Mammary epithelial cell (primary cell): ENCODE measurements at regions of chr3 and their contacts with region 1.

Region 1: DNA sequence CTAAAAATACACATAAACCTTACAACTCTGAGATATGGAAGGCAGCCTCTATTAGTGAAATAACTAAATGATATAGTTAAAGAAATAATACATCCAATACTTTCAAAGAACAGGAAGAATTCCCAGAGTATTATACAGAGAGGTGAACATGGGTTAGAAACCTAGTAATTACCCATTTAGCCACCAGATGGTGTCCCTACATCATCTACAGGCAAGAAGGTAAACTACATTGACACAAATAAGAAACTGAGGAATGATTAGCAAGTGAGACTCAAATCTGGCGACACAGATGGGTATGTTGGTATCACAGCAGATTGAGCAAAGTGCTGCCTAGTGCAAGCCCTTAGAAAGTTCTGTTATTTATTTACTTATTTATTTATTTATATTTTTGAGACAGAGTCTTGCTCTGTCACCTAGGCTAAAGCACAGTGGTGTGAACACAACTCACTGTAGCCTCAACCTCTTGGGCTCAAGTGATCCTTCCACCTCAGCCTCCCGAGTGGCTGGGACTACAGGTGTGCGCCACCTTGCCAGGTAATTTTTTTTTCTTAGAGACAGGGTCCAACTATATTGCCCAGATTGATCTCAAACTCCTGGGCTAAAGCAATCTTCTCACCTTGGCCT is 28.2 kb downstream of the NEK4 start:
- DNase-seq: peak; percentile 14
- H3K4me3 ChIP-seq: no peak overlapping the region
- H3K27ac ChIP-seq: no peak overlapping the region
- H3K4me1 ChIP-seq: no peaks in the 10 kb centered on the region
- H3K27me3 ChIP-seq: no peaks in the 10 kb centered on the region
- CTCF ChIP-seq: peak; percentile 56 to 65

Region 2: DNA sequence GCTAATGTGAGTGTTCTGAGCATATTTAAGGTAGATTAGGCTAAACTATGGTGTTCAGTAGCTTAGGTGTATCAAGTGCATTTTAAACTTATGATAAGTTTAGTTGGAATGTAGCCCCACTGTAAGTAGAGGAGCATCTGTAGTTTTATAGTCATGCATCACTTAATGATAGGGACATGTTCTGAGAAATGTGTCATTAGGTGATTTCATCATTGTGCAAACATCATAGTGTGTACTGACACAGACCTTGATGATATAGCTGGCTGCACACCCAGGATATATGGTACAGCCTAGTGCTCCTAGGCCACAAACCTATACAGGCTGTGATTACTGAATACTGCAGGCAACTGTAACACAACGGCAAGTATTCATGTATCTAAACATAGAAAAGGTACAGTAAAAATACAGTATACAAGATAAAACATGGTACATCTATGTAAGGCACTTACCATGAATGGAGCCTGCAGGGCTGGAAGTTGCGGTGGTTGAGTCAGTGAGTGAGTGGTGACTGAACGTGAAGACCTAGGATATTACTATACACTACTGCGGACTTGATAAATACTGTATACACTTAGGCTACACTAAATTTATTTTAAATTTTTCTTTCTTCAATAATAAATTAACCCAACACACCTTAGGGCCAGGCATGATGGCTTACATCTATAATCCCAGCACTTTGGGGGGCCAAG is 408.5 kb before region 1 on chr3:
- CTCF ChIA-PET with region 1: no interaction called
- dilution Hi-C with region 1: no loop called
- in situ Hi-C with region 1: no loop called
- intact Hi-C with region 1: no loop called
- DNase-seq: peak; percentile 45
- H3K4me3 ChIP-seq: no peak overlapping the region
- H3K27ac ChIP-seq: no peak overlapping the region
- H3K4me1 ChIP-seq: peaks cover 8% of the 10 kb centered on the region
- H3K27me3 ChIP-seq: no peaks in the 10 kb centered on the region
- CTCF ChIP-seq: no peak

Region 3: DNA sequence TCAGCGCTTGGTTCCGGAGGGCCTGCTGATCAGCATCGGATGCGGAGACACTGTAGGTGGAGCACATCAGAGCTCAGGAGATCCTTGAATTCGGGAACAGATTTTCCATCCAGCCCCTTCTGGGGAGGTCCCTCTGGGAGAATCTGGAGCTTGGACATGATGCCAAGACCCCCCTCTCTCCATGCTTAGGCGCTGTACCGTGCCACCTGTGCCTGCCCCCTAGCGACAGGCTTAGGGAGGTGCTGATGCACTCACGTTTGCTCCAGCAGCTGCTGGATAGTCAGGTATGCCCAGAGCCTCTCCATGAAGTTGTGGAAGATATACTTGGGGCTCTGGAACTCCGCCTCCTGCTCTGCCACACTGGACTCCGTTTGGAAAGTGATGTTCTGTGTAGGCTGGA is 78.2 kb after region 1 on chr3:
- CTCF ChIA-PET with region 1: no interaction called
- dilution Hi-C with region 1: no loop called
- in situ Hi-C with region 1: no loop called
- intact Hi-C with region 1: loop called (anchors 1 kb)
- DNase-seq: no peak
- H3K4me3 ChIP-seq: no peak overlapping the region
- H3K27ac ChIP-seq: no peak overlapping the region
- H3K4me1 ChIP-seq: no peaks in the 10 kb centered on the region
- H3K27me3 ChIP-seq: no peaks in the 10 kb centered on the region
- CTCF ChIP-seq: peak; percentile 74 to 80

Region 4: GRCh38 chr3:52851348-52851747 is 108.8 kb after region 1 on chr3:
- CTCF ChIA-PET with region 1: no interaction called
- dilution Hi-C with region 1: no loop called
- in situ Hi-C with region 1: no loop called
- intact Hi-C with region 1: loop called (anchors 1 kb)
- DNase-seq: peak; percentile 12
- H3K4me3 ChIP-seq: no peak overlapping the region
- H3K27ac ChIP-seq: no peak overlapping the region
- H3K4me1 ChIP-seq: no peaks in the 10 kb centered on the region
- H3K27me3 ChIP-seq: no peaks in the 10 kb centered on the region
- CTCF ChIP-seq: peak; percentile 35 to 64

Region 5: GRCh38 chr3:52934630-52935530 is 192.3 kb after region 1 on chr3:
- CTCF ChIA-PET with region 1: no interaction called
- dilution Hi-C with region 1: no loop called
- in situ Hi-C with region 1: no loop called
- intact Hi-C with region 1: loop called (anchors 1 kb)
- DNase-seq: peak; percentile 24
- H3K4me3 ChIP-seq: no peak overlapping the region
- H3K27ac ChIP-seq: no peak overlapping the region
- H3K4me1 ChIP-seq: no peaks in the 10 kb centered on the region
- H3K27me3 ChIP-seq: no peaks in the 10 kb centered on the region
- CTCF ChIP-seq: peak; percentile 83 to 87

Region 6: GRCh38 chr3:52986938-52987337 is 244.4 kb after region 1 on chr3:
- CTCF ChIA-PET with region 1: no interaction called
- dilution Hi-C with region 1: no loop called
- in situ Hi-C with region 1: no loop called
- intact Hi-C with region 1: loop called (anchors 5 kb)
- DNase-seq: no peak
- H3K4me3 ChIP-seq: no peak overlapping the region
- H3K27ac ChIP-seq: no peak overlapping the region
- H3K4me1 ChIP-seq: no peaks in the 10 kb centered on the region
- H3K27me3 ChIP-seq: no peaks in the 10 kb centered on the region
- CTCF ChIP-seq: peak in 1 of 2 donors; percentile 43

Region 7: GRCh38 chr3:53114011-53114400 is 371.5 kb after region 1 on chr3:
- CTCF ChIA-PET with region 1: no interaction called
- dilution Hi-C with region 1: no loop called
- in situ Hi-C with region 1: no loop called
- intact Hi-C with region 1: loop called (anchors 1 kb)
- DNase-seq: peak; percentile 76
- H3K4me3 ChIP-seq: no peak overlapping the region
- H3K27ac ChIP-seq: peak overlapping the region; percentile 50
- H3K4me1 ChIP-seq: peaks cover 41% of the 10 kb centered on the region
- H3K27me3 ChIP-seq: no peaks in the 10 kb centered on the region
- CTCF ChIP-seq: peak; percentile 85 to 92